Thyroid gland (tissue), 4 donors: ENCODE measurements at regions of chr19 and their contacts with region 1.

Region 1: DNA sequence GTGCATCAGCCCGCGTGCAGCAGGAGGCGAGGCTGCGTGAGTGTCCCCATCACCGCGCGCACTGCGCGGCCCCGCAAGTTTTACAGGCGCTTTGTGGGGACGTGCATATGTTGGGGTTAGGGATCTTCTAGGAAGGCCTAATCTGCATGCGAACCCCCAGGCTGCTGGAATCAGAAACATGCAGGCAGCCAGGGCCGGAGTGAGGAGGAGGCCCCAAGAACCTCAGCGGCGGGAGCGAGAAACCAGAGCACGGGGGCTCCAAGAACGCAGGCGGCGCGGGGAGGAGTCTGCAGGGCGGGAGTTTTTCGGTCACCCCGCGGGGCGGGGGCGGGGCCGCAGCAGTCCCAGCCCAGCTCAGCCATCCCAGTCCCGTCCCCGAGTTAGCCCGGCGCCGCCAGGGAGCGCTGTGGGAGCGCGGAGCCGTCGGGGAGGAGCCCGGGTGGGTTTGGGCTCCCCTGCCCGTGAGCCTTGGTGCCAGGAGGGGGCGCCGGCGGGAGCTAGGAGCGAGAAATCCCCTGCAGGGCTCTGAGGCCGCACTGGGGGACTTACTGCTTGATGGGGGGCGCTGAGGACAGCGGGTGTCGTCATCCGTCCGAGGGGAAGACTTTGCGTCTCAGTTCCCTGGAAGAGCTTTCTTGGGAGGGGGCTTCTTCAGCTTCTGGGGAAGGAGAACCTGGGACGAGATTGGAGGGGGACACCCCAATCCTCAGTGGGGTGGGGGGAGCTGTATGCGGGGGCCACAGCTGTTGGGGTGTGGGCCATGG is 933 bp upstream of the NRTN start:
- DNase-seq: peak; percentile 75 to 80
- H3K4me3 ChIP-seq: peak overlapping the region in 1 of 3 donors; percentile 14
- H3K27ac ChIP-seq: no peak overlapping the region
- H3K4me1 ChIP-seq: peaks cover 9 to 25% of the 10 kb centered on the region in 2 donors
- H3K27me3 ChIP-seq: peaks cover 3% of the 10 kb centered on the region
- CTCF ChIP-seq: peak; percentile 60 to 94 (median 84)
- POLR2A ChIP-seq: no peak

Region 2: DNA sequence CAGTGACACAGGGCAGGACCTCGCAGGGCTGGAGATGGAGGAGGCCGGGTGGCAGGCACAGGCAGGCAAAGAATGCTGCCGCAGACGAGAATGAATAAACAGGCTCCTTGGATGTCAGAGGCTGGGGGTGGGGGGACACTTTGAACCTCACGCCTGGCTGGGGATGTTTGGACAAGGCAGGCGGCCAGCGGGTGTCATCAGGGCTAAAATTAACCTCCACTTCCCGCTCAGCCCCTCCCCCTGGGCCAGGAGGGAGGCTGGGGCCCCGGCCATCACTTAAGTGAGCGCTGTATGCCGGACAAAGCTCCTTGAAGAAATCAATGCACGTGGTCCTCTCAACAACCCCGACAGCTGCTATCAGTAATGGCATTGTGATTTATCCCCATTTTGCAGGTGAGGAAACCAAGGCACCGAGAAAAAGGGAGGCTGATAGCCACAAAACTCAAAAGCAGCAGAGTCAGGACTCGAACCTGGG is 76.7 kb after region 1 on chr19:
- intact Hi-C with region 1: no loop called
- DNase-seq: peak; percentile 80 to 85
- H3K4me3 ChIP-seq: no peak overlapping the region
- H3K27ac ChIP-seq: peak overlapping the region in 1 of 3 donors; percentile 53
- H3K4me1 ChIP-seq: peaks cover 9 to 27% of the 10 kb centered on the region in 2 donors
- H3K27me3 ChIP-seq: no peaks in the 10 kb centered on the region
- CTCF ChIP-seq: no peak
- POLR2A ChIP-seq: no peak

Region 3: GRCh38 chr19:5891938-5892771 is 88.2 kb after region 1 on chr19:
- intact Hi-C with region 1: loop called (anchors 2 kb)
- DNase-seq: peak; percentile 37 to 41
- H3K4me3 ChIP-seq: no peak overlapping the region
- H3K27ac ChIP-seq: no peak overlapping the region
- H3K4me1 ChIP-seq: peaks cover 7 to 40% of the 10 kb centered on the region in 2 donors
- H3K27me3 ChIP-seq: no peaks in the 10 kb centered on the region
- CTCF ChIP-seq: peak; percentile 30 to 70 (median 48)
- POLR2A ChIP-seq: no peak

Region 4: GRCh38 chr19:5967994-5968430 is 164.1 kb after region 1 on chr19:
- intact Hi-C with region 1: loop called (anchors 10 kb)
- DNase-seq: peak; percentile 76 to 77
- H3K4me3 ChIP-seq: peak overlapping the region in 1 of 3 donors; percentile 1
- H3K27ac ChIP-seq: peak overlapping the region; percentile 61 to 95 (median 91)
- H3K4me1 ChIP-seq: peaks cover 23 to 42% of the 10 kb centered on the region in 2 donors
- H3K27me3 ChIP-seq: no peaks in the 10 kb centered on the region
- CTCF ChIP-seq: peak; percentile 80 to 93 (median 88)
- POLR2A ChIP-seq: no peak

Region 5: DNA sequence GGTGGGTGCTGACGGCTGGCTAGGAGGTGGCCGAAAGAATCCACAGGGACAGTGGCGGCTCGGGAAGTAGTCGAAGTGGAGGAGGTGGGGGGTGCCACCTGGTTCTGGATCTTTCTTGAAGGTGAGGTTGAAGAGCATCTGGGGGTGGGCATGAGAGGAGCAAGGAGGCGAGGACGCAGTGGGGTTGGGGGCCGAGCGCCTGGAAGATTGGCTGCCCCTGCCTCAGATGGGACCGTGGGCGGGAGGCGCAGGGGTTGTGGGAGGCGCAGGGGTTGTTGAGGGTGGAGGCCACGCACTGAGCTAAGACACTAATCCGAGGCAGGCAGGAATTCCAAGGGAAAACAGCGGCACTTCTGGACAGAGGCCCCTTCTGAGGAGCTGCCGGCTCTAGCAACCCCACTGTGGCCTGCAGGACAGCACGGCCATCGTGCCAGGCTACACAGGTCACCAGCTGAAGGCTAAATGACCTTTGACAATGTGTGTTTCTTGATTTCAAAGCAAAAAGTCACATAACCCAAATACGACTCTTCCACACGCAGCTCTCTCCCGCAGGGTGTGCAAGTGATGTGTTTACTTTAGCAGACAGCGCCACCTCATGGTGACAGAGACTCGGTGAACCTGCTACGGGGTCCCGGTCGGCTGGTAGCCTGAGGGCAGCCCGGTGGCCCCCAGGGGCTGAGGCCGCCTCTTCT is 218.1 kb after region 1 on chr19:
- intact Hi-C with region 1: loop called (anchors 5 kb)
- DNase-seq: peak; percentile 84 to 88
- H3K4me3 ChIP-seq: no peak overlapping the region
- H3K27ac ChIP-seq: no peak overlapping the region
- H3K4me1 ChIP-seq: peaks cover 0 to 10% of the 10 kb centered on the region in 2 donors
- H3K27me3 ChIP-seq: no peaks in the 10 kb centered on the region
- CTCF ChIP-seq: peak; percentile 51 to 87 (median 84)
- POLR2A ChIP-seq: no peak